HEK293 (cell line): ENCODE measurements at regions of chr11 and their contacts with region 1.

Region 1: GRCh38 chr11:8964324-8965320 is at the start of gene TMEM9B:
- H3K4me3 ChIP-seq: peak within 1 kb of the TSS; percentile 89
- H3K27ac ChIP-seq: peak within 1 kb of the TSS; percentile 77
- H3K4me1 ChIP-seq: no peaks in the 10 kb centered on the region
- CTCF ChIP-seq: no peak

Region 2: GRCh38 chr11:8917157-8917825 is 47.3 kb before region 1 on chr11:
- CTCF ChIA-PET with region 1: interaction called, 96 read pairs
- POLR2A ChIA-PET with region 1: interaction called, 12 read pairs
- H3K4me3 ChIP-seq: no peak overlapping the region
- H3K27ac ChIP-seq: no peak overlapping the region
- H3K4me1 ChIP-seq: no peaks in the 10 kb centered on the region
- CTCF ChIP-seq: no peak

Region 3: DNA sequence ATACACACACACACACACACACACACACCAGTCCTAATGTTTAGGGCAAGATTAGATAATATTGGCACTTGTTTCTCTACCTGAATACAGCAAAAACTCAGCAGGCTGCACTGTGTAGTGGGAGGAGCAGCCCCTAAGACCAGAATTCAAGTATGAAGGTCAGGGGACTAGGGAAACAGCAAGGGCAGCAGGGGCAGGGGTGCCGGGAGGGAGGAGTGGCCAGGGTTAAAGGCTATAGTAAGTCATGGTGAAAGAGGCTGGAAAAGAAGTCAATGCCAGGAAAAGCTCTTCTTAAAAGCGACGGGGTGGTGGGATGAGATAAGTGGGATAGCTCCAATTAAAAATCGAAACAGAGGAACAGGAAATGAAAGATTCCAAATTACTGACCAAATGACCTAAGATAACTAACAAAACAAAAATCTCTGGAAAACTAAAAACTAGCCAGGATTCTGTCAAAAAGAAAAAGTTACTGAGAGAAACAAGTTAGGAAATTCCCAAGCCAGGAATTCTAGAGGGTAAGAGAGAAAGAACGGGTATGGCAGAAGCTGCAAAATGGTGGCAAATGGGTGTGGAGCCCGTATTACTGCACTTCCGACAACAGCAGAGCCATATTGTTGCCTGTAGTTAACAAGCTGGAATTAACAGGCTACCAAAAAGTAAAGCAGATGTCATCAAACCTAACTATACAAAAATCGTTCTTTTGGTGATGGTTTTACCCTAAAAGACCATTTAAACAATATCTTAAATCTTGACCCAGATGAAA is 23.1 kb before region 1 on chr11:
- CTCF ChIA-PET with region 1: interaction called, 10 read pairs
- POLR2A ChIA-PET with region 1: no interaction called
- H3K4me3 ChIP-seq: no peak overlapping the region
- H3K27ac ChIP-seq: no peak overlapping the region
- H3K4me1 ChIP-seq: no peaks in the 10 kb centered on the region
- CTCF ChIP-seq: no peak

Region 4: GRCh38 chr11:9003573-9004309 is 39.1 kb after region 1 on chr11 and contains the start of gene NRIP3:
- CTCF ChIA-PET with region 1: interaction called, 3 read pairs
- POLR2A ChIA-PET with region 1: interaction called, 21 read pairs
- H3K4me3 ChIP-seq: peak within 1 kb of the TSS; percentile 51
- H3K27ac ChIP-seq: no peak within 1 kb of the TSS; the same call in 1 of the 2 replicates
- H3K4me1 ChIP-seq: no peaks in the 10 kb centered on the region
- CTCF ChIP-seq: no peak; the same call in 1 of the 2 replicates